Gastrocnemius medialis (tissue), 4 donors: ENCODE measurements at regions of chr10 and their contacts with region 1.

Region 1: GRCh38 chr10:118754720-118755480 is at the start of gene CACUL1:
- DNase-seq: peak; percentile 100
- ATAC-seq: peak; percentile 93 to 95
- H3K4me3 ChIP-seq: peak within 1 kb of the TSS; percentile 81 to 100 (median 96)
- H3K27ac ChIP-seq: peak within 1 kb of the TSS; percentile 87 to 99 (median 98)
- H3K4me1 ChIP-seq: peaks cover 38 to 39% of the 10 kb centered on the region in 2 donors
- H3K27me3 ChIP-seq: no peaks in the 10 kb centered on the region
- CTCF ChIP-seq: no peak
- POLR2A ChIP-seq: peak; percentile 87 to 92
- total RNA-seq, gene CACUL1: 28.5 to 59.5 (median 38.2) TPM

Region 2: DNA sequence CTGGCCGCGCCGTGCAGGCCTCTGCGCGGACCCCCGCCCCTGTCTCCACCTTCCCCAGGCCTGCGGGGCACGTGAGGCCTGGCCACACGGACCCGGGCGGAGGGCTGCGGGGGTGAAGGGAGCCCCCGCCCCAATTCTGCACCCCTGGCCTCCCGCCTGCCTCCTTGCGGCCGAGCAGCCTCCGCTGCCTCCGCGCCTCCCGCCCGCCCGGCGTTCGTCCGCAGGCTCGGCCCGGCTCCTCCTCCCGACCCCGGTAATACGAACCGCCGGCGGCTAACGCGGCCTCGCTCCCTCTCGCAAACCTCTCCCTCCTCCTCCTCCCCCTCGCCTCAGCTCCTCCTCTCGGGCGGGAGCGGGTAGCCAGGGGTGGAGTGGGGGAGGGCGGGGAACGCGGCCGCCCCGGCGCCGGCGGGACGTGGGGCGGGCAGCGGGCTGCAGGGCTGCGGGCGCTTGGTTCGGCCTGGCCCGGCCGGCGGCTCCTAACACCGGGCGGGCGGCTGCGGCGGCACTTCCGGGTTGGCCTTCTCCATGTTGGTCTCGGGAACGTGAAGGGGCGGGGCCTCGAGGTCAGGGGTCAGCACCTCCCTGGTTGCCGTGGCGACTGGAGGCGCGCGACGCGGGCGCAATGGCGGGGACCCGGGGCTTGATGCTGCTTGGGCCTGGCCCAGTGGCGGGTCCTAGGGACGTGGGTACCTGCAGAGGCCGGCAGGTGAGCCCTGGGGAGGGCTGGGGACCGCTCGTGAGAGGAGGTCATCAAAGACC is 708.3 kb before region 1 on chr10 and contains the start of gene RAB11FIP2:
- in situ Hi-C with region 1: no loop called
- intact Hi-C with region 1: loop called (anchors 10 kb)
- DNase-seq: peak; percentile 92 to 93
- ATAC-seq: peak; percentile 92 to 93
- H3K4me3 ChIP-seq: peak within 1 kb of the TSS; percentile 74 to 92 (median 78)
- H3K27ac ChIP-seq: peak within 1 kb of the TSS; percentile 87 to 96 (median 92)
- H3K4me1 ChIP-seq: peaks cover 36 to 48% of the 10 kb centered on the region in 2 donors
- H3K27me3 ChIP-seq: no peaks in the 10 kb centered on the region
- CTCF ChIP-seq: peak in 1 of 5 experiments; percentile 14
- POLR2A ChIP-seq: peak; percentile 72 to 81
- total RNA-seq, gene RAB11FIP2: 9.6 to 15.5 (median 11.3) TPM

Region 3: DNA sequence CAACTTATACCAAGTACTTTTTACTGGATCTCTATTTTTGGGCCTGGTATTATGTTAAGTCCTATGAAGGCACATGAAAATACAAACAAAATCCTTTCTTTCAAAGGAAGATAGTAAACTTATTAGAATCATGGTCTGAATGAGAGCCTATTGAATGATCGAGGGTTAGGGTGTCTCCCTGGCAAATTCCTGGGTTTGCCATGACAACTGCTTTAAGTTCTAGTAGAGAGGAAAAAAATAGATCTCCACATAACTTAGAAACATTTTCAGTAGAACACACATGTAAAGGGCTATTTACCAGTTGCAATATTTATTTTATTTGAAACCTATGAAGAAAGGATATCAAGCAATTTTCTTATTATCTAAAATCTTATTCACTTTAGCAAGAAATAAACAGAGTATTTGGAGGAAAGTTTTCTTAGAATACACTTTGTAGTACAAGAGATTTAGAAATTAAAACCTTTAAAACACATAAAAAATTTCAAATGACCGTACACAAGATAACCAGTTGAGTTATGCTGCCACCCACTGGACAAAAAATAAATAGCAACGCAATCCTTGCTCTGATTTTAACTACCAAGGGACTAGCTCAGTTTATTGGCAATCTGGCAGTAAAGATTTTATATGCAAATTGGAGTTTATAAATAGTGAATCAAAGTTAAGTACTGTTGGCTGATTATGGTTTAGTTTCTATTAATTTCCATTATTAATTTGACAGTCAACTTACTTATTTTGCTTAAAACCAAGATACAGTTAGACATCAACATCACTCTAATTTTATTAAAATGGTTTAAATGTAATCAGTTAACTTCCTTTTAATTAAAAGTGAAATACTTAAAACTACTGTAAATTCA is 34.0 kb before region 1 on chr10:
- in situ Hi-C with region 1: no loop called
- intact Hi-C with region 1: no loop called
- DNase-seq: no peak
- ATAC-seq: no peak
- H3K4me3 ChIP-seq: no peak overlapping the region
- H3K27ac ChIP-seq: no peak overlapping the region
- H3K4me1 ChIP-seq: peaks cover 41 to 47% of the 10 kb centered on the region in 2 donors
- H3K27me3 ChIP-seq: no peaks in the 10 kb centered on the region
- CTCF ChIP-seq: peak; percentile 63 to 92 (median 76)
- POLR2A ChIP-seq: no peak

Region 4: DNA sequence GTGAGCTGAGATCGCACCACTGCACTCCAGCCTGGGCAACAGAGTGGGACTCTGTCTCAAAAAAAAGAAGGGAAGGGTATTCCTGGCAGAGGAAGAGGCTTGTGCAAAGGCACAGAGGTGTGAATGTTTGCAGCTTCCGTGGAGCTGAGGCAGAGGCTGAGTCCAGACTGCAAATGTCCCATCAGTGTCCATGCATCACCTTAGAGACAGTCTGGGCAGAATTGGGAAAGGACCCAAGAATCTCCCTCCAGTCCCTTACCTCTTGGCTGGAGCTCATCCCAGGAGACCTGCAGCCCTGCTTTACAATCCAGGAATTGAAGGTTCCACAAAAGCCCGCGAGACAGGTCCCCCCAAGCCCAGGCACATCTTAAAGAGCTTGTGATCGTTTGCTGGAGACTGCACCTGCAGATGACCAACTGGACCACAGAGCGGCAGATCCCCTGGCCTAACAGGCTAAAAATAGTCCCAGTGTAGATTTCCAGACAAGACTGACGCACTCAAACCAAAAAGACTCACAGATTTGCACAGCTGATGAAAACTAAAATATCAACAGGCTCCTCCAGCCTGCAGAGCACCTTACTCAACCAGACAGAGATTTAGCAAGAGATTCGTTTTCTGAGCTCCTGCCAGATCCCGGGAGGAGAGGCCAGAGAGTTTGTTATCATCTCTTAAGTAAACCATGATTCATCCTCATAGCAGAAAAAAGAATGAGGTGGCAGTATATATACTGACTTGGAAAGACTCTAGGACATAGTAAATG is 251.7 kb after region 1 on chr10:
- in situ Hi-C with region 1: no loop called
- intact Hi-C with region 1: loop called (anchors 5 kb)
- DNase-seq: peak; percentile 75 to 95
- ATAC-seq: peak; percentile 93 to 98
- H3K4me3 ChIP-seq: no peak overlapping the region
- H3K27ac ChIP-seq: peak overlapping the region; percentile 81 to 87 (median 86)
- H3K4me1 ChIP-seq: peaks cover 20 to 22% of the 10 kb centered on the region in 2 donors
- H3K27me3 ChIP-seq: no peaks in the 10 kb centered on the region
- CTCF ChIP-seq: peak in 1 of 5 experiments; percentile 15
- POLR2A ChIP-seq: peak; percentile 29 to 31

Region 5: GRCh38 chr10:119178372-119179119 is 423.6 kb after region 1 on chr10 and contains the start of gene PRDX3:
- in situ Hi-C with region 1: no loop called
- intact Hi-C with region 1: loop called (anchors 10 kb)
- DNase-seq: peak; percentile 83 to 90
- ATAC-seq: peak; percentile 96 to 97
- H3K4me3 ChIP-seq: peak within 1 kb of the TSS; percentile 74 to 91 (median 87)
- H3K27ac ChIP-seq: peak within 1 kb of the TSS; percentile 90 to 97 (median 94)
- H3K4me1 ChIP-seq: peaks cover 18 to 24% of the 10 kb centered on the region in 2 donors
- H3K27me3 ChIP-seq: no peaks in the 10 kb centered on the region
- CTCF ChIP-seq: peak in 3 of 5 experiments; percentile 36 to 56 (median 50)
- POLR2A ChIP-seq: peak; percentile 65 to 79
- total RNA-seq, gene PRDX3: 227 to 342 (median 250) TPM

Region 6: DNA sequence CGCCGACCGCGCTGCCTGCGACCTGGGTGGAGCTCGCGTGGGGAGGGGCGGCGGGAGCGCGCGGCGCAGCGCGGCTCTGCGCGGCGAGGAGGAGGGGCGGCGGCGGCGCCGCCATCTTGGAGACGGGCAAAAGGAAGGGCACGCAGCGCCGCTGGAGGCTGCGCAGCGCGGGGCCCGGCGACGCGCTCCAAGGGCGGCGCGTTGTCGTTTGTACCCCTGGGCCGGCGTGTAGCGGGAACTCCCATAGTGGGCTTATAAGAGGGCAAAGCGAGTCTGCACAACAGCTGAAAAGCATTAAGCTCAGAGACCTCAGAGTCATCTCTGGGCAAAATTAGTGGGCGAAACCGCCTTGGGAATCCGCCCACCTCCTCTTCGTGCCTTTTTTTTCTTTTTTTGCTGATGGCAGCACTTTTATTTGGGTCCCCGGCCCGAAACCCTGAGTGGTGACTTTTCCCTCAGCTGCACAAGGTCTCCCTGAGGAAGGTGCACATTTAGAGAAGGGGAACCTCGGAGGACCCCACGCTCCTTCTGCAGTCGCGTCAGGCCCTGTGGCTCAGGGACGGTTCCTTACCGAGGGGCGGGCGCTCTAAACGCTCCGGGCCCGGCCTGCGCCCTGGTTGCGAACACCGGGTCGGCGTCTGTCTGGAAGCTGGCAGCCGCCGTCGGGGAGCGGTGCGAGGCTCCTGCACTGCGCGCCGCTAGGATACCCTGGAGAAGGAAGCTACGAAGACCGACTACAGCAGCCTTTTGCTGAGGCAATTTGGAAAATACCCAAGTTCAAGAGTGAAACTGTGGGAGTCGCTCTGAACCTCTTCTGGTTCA is 1118.2 kb after region 1 on chr10:
- in situ Hi-C with region 1: no loop called
- intact Hi-C with region 1: loop called (anchors 5 kb)
- DNase-seq: peak; percentile 71 to 81
- ATAC-seq: peak; percentile 92 to 93
- H3K4me3 ChIP-seq: peak overlapping the region; percentile 85 to 96 (median 90)
- H3K27ac ChIP-seq: peak overlapping the region; percentile 89 to 97 (median 92)
- H3K4me1 ChIP-seq: peaks cover 17 to 28% of the 10 kb centered on the region in 2 donors
- H3K27me3 ChIP-seq: no peaks in the 10 kb centered on the region
- CTCF ChIP-seq: peak in 1 of 5 experiments; percentile 2
- POLR2A ChIP-seq: peak in 1 of 2 donors; percentile 42